Heart left ventricle (tissue), 16 donors: ENCODE measurements at regions of chr20 and their contacts with region 1.

Region 1: DNA sequence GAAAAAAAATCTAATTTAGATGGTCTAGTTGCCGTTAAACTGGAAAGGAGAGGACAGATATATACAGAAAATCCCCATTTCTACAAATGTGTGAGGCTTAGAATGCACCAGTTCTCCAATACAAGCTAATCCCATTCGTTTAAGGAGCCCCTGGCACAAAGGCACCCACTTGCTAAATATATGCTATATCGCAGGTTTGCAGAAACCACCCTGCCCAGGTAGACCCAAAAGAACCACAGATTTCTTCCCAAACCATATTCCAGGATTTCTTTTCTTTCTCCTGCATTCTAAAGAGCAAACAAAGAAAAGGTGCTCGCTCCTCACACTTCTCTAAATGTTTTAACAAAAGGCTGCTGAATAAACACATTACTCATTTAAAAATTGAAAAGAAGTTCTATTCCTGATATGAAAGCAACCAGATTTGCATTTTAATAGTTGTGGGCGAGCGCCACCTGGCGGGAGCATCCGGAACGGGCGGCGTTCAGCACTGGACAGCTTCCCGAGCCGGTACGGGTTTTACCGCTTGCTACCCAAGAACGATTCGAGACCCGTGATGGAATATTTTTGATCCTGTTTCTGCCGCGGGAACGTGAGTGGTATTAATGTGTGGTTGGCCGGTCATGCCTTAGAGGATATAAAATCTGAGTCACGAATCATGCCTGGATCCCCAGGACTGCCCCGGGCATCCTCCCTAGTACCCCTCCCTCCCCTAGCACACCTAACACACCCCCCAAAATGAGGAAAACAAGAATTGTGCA is 2.1 kb downstream of the PTPRT start:
- DNase-seq: peak; percentile 51 to 76 (median 65)
- ATAC-seq: peak in 3 of 4 donors; percentile 47 to 68 (median 52)
- H3K4me3 ChIP-seq: peak overlapping the region in 5 of 12 donors; percentile 35 to 47 (median 43)
- H3K27ac ChIP-seq: no peak overlapping the region
- H3K4me1 ChIP-seq: peaks cover 0 to 22% (median 5%) of the 10 kb centered on the region in 12 donors
- H3K27me3 ChIP-seq: peaks cover 9 to 73% (median 47%) of the 10 kb centered on the region in 9 donors
- CTCF ChIP-seq: peak; percentile 90 to 98 (median 96)
- POLR2A ChIP-seq: no peak

Region 2: GRCh38 chr20:41738604-41739206 is 1449.0 kb before region 1 on chr20:
- intact Hi-C with region 1: loop called (anchors 1 to 5 kb)
- DNase-seq: peak in 3 of 5 donors; percentile 21 to 41 (median 25)
- ATAC-seq: peak in 3 of 4 donors; percentile 67 to 80 (median 69)
- H3K4me3 ChIP-seq: no peak overlapping the region
- H3K27ac ChIP-seq: no peak overlapping the region
- H3K4me1 ChIP-seq: no peaks in the 10 kb centered on the region
- H3K27me3 ChIP-seq: no peaks in the 10 kb centered on the region
- CTCF ChIP-seq: peak; percentile 63 to 84 (median 76)
- POLR2A ChIP-seq: no peak

Region 3: DNA sequence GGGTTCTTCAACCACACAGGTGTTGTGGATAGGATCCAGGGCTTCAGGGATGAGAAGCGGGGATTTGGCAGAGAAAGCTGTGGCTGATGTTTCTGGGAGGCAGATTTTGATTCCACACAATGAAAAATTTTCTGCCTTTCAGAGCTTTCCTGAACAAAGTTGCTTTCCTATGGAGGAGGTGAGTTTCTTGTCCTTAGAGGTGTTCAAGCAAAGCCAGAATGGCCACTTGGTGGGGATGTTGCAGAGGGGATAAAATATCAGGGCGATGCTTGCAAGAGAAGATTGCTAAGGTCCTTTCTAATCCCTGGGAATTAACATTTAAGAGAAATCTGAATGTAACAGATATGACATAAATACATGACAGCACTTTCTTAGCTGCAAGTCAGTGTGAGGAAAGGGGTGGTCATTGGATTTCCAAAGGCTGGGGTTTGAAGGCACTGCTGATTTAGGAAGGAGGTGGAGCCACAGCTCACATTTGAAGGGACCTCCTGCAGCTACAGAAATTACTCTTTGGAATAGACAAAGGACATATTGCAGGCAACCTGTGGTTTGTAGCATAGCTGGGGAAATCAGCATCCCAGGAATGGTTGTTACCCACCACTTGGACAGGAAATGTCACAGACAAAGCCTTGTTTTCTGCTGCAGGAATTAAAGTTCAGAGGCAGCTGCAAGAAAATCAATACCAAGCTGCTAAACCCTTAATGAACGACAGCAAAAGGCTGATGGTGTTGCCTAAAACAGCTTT is 1298.4 kb before region 1 on chr20:
- intact Hi-C with region 1: loop called in 1 of 10 experiments (anchors 10 kb)
- DNase-seq: no peak
- ATAC-seq: no peak
- H3K4me3 ChIP-seq: no peak overlapping the region
- H3K27ac ChIP-seq: no peak overlapping the region
- H3K4me1 ChIP-seq: no peaks in the 10 kb centered on the region
- H3K27me3 ChIP-seq: peaks cover 0 to 9% (median 0%) of the 10 kb centered on the region in 9 donors
- CTCF ChIP-seq: peak in 6 of 12 donors; percentile 16 to 33 (median 25)
- POLR2A ChIP-seq: no peak

Region 4: GRCh38 chr20:41955999-41956705 is 1231.5 kb before region 1 on chr20:
- intact Hi-C with region 1: loop called in 7 of 10 experiments (anchors 5 to 10 kb)
- DNase-seq: no peak
- ATAC-seq: no peak
- H3K4me3 ChIP-seq: no peak overlapping the region
- H3K27ac ChIP-seq: no peak overlapping the region
- H3K4me1 ChIP-seq: no peaks in the 10 kb centered on the region
- H3K27me3 ChIP-seq: peaks cover 0 to 8% (median 0%) of the 10 kb centered on the region in 9 donors
- CTCF ChIP-seq: peak in 10 of 12 donors; percentile 20 to 57 (median 42)
- POLR2A ChIP-seq: no peak

Region 5: GRCh38 chr20:42191143-42191917 is 996.3 kb before region 1 on chr20:
- intact Hi-C with region 1: loop called in 2 of 10 experiments (anchors 10 kb)
- DNase-seq: no peak
- ATAC-seq: no peak
- H3K4me3 ChIP-seq: no peak overlapping the region
- H3K27ac ChIP-seq: no peak overlapping the region
- H3K4me1 ChIP-seq: no peaks in the 10 kb centered on the region
- H3K27me3 ChIP-seq: no peaks in the 10 kb centered on the region
- CTCF ChIP-seq: peak in 2 of 12 donors; percentile 8 to 23
- POLR2A ChIP-seq: no peak

Region 6: DNA sequence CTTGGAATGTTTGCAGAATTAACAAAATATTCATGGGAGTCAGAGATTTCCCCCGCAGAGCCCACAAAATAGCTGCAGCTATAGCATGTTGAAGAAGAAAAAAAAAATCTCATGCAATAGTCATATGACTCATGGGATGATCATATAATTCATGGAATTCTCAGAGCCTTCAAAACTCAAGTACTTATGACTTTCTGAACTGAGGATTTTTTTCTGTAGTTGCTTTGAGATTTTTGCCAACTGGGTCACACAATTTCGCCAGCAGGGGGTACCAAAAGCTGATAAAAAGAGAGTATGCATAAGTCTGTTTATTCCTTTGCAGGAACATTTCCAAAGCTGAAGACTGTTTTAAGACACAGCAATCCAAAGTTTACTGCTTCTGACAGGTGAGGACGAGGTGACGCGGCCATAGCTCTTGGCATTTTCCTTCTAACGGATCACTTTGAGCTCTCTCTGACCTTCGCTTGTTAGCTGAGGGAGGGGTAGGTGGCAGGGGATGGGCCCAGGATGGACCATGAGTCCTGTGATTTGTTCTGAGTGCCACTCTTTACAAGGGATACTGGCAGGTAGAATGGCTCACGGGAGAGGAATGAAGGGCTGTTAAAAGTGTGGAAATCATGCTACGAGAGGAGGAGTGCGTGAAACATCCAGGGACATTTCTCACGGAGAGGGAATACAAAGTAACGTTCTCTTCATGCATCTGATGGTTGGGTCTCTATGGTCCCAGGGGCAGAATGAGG is 983.3 kb before region 1 on chr20:
- intact Hi-C with region 1: loop called in 3 of 10 experiments (anchors 5 to 10 kb)
- DNase-seq: no peak
- ATAC-seq: no peak
- H3K4me3 ChIP-seq: no peak overlapping the region
- H3K27ac ChIP-seq: no peak overlapping the region
- H3K4me1 ChIP-seq: peaks cover 0 to 7% (median 0%) of the 10 kb centered on the region in 12 donors
- H3K27me3 ChIP-seq: no peaks in the 10 kb centered on the region
- CTCF ChIP-seq: peak in 11 of 12 donors; percentile 25 to 62 (median 44)
- POLR2A ChIP-seq: no peak

Region 7: GRCh38 chr20:42530822-42531448 is 656.7 kb before region 1 on chr20:
- intact Hi-C with region 1: loop called in 3 of 10 experiments (anchors 10 kb)
- DNase-seq: no peak
- ATAC-seq: peak in 1 of 4 donors; percentile 38
- H3K4me3 ChIP-seq: no peak overlapping the region
- H3K27ac ChIP-seq: no peak overlapping the region
- H3K4me1 ChIP-seq: peaks cover 0 to 10% (median 0%) of the 10 kb centered on the region in 12 donors
- H3K27me3 ChIP-seq: no peaks in the 10 kb centered on the region
- CTCF ChIP-seq: peak; percentile 49 to 80 (median 70)
- POLR2A ChIP-seq: no peak

Region 8: GRCh38 chr20:43293063-43293786 is 105.6 kb after region 1 on chr20:
- intact Hi-C with region 1: no loop called
- DNase-seq: no peak
- ATAC-seq: no peak
- H3K4me3 ChIP-seq: no peak overlapping the region
- H3K27ac ChIP-seq: no peak overlapping the region
- H3K4me1 ChIP-seq: no peaks in the 10 kb centered on the region
- H3K27me3 ChIP-seq: peaks cover 0 to 9% (median 0%) of the 10 kb centered on the region in 9 donors
- CTCF ChIP-seq: no peak
- POLR2A ChIP-seq: no peak